HEK293 (cell line): ENCODE measurements at regions of chr11 and their contacts with region 1.

Region 1: DNA sequence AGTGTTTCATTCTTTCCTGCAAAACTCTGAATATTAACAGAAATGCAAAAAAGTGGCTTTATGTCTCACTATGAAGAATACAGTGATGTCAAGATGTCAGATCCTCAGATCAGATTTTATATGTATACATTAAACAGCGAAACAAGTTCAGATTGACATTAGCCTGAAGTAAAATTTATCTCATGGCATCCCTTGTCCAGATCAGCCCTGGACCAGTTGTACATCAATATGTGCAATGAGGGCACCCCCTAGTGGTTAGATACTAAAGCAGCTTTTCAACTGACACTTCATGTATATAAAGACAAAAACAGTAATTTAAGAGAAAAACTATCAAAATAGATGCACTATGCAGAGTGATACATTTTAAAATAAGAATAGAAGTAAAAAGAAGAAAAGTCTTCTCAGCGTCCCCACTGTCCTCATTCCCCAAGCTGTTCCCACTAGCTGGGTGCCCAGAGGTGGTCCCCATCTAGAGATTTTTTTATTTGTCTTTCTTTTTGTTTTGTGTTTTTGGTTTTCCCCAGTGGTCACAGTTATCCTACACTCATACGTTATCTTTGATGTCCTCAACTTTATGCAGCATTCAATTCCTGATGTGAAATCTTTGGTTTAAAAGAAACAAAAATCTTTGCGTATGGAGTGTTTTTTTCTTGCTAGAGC is 2193.4 kb upstream of the RAG2 start:
- H3K4me3 ChIP-seq: no peak overlapping the region
- H3K27ac ChIP-seq: no peak overlapping the region
- H3K4me1 ChIP-seq: no peaks in the 10 kb centered on the region
- CTCF ChIP-seq: no peak

Region 2: GRCh38 chr11:37946155-37946766 is 845.2 kb before region 1 on chr11:
- CTCF ChIA-PET with region 1: interaction called, 12 read pairs
- POLR2A ChIA-PET with region 1: no interaction called
- H3K4me3 ChIP-seq: no peak overlapping the region
- H3K27ac ChIP-seq: no peak overlapping the region
- H3K4me1 ChIP-seq: no peaks in the 10 kb centered on the region
- CTCF ChIP-seq: no peak

Region 3: DNA sequence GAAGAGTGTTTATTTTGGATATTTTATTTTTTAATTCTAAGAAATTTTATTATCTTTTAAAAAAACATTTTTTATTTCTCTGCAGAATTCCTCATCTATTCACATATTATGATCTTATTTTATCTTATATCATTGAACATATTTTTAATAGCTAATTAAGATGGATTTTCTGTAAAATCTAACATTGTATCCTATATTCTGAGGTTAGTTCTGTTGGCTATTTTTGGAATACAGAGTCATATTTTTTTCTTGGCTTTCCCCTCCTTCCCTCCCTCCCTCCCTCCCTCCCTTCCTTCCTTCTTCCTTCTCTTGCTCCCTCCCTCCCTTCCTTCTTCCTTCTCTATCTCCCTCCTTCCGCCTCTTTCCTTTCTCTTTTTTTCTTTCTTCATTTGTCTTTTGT is 133.2 kb after region 1 on chr11:
- CTCF ChIA-PET with region 1: no interaction called
- POLR2A ChIA-PET with region 1: no interaction called
- H3K4me3 ChIP-seq: no peak overlapping the region
- H3K27ac ChIP-seq: no peak overlapping the region
- H3K4me1 ChIP-seq: no peaks in the 10 kb centered on the region
- CTCF ChIP-seq: no peak